Activated CD4-positive, alpha-beta memory T cell treated with anti-CD3 and anti-CD28 coated beads, Interleukin-2, amount 10 ng/mL, durations not matched to agents 7 days and 5 days (primary cell): ENCODE measurements at regions of chr20 and their contacts with region 1.

Region 1: GRCh38 chr20:49888345-49888966 is 26.9 kb downstream of the SPATA2 start:
- DNase-seq: peak; percentile 62
- H3K4me3 Mint-ChIP-seq: no peak overlapping the region
- H3K27ac Mint-ChIP-seq: peak overlapping the region; percentile 8
- H3K4me1 Mint-ChIP-seq: peaks cover 24% of the 10 kb centered on the region
- H3K27me3 Mint-ChIP-seq: no peaks in the 10 kb centered on the region

Region 2: GRCh38 chr20:49775229-49775693 is 113.2 kb before region 1 on chr20:
- CTCF ChIA-PET with region 1: no interaction called
- POLR2A ChIA-PET with region 1: no interaction called
- DNase-seq: no peak
- H3K4me3 Mint-ChIP-seq: no peak overlapping the region
- H3K27ac Mint-ChIP-seq: no peak overlapping the region
- H3K4me1 Mint-ChIP-seq: peaks cover 27% of the 10 kb centered on the region
- H3K27me3 Mint-ChIP-seq: peaks cover 12% of the 10 kb centered on the region

Region 3: GRCh38 chr20:49906101-49906604 is 17.7 kb after region 1 on chr20:
- CTCF ChIA-PET with region 1: interaction called, 10 read pairs
- POLR2A ChIA-PET with region 1: interaction called, 7 read pairs
- DNase-seq: no peak
- H3K4me3 Mint-ChIP-seq: no peak overlapping the region
- H3K27ac Mint-ChIP-seq: no peak overlapping the region
- H3K4me1 Mint-ChIP-seq: peaks cover 2% of the 10 kb centered on the region
- H3K27me3 Mint-ChIP-seq: no peaks in the 10 kb centered on the region

Region 4: GRCh38 chr20:50003253-50003656 is 114.8 kb after region 1 on chr20:
- CTCF ChIA-PET with region 1: no interaction called
- POLR2A ChIA-PET with region 1: no interaction called
- DNase-seq: no peak
- H3K4me3 Mint-ChIP-seq: no peak overlapping the region
- H3K27ac Mint-ChIP-seq: no peak overlapping the region
- H3K4me1 Mint-ChIP-seq: peaks cover 25% of the 10 kb centered on the region
- H3K27me3 Mint-ChIP-seq: peaks cover 20% of the 10 kb centered on the region